Endothelial cell of umbilical vein (primary cell): ENCODE measurements at regions of chr5 and their contacts with region 1.

Region 1: DNA sequence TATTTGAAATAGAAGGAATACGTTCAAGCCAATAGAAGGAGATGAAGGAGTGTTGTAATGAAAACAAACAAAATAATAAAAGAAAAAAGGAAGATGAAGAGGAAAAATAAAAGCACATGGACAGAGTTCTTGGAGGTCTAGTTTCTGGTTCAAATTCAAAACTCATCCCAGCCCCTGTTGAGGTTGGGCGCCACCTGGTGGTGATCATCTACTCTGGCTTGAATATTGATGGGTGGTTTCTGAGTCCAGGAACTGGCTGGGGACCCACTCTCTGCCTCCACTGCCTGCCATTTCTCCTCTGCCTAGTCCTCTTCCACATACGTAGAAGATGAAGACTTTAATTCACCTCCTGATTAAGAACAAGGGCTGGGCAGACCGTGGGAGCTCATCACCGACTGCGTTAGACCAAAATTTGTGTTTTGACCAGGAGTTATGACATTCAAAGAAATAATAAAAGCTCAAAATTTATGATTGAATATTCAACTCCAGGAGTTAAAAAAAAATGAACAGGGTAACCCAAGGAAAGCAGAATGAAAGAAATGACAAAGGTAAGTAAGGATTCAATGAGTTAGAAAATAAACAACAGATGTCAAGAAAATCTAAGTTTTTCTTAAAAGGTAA is 99.0 kb upstream of the SLC1A3 start:
- DNase-seq: peak; percentile 53
- H3K4me3 ChIP-seq: no peak overlapping the region
- H3K27ac ChIP-seq: no peak overlapping the region
- H3K4me1 ChIP-seq: no peaks in the 10 kb centered on the region
- H3K27me3 ChIP-seq: no peaks in the 10 kb centered on the region
- CTCF ChIP-seq: peak; percentile 78 to 84
- POLR2A ChIP-seq: no peak

Region 2: GRCh38 chr5:36214434-36214833 is 293.0 kb before region 1 on chr5:
- CTCF ChIA-PET with region 1: interaction called, 3 read pairs
- POLR2A ChIA-PET with region 1: no interaction called
- dilution Hi-C with region 1: no loop called
- intact Hi-C with region 1: loop called (anchors 1 kb)
- DNase-seq: no peak
- H3K4me3 ChIP-seq: no peak overlapping the region
- H3K27ac ChIP-seq: no peak overlapping the region
- H3K4me1 ChIP-seq: peaks cover 11% of the 10 kb centered on the region
- H3K27me3 ChIP-seq: no peaks in the 10 kb centered on the region
- CTCF ChIP-seq: no peak
- POLR2A ChIP-seq: no peak

Region 3: GRCh38 chr5:36414869-36415282 is 92.6 kb before region 1 on chr5:
- CTCF ChIA-PET with region 1: interaction called, 72 read pairs
- POLR2A ChIA-PET with region 1: no interaction called
- dilution Hi-C with region 1: no loop called
- intact Hi-C with region 1: loop called (anchors 1 kb)
- DNase-seq: peak; percentile 42
- H3K4me3 ChIP-seq: no peak overlapping the region
- H3K27ac ChIP-seq: no peak overlapping the region
- H3K4me1 ChIP-seq: no peaks in the 10 kb centered on the region
- H3K27me3 ChIP-seq: no peaks in the 10 kb centered on the region
- CTCF ChIP-seq: peak; percentile 9 to 21
- POLR2A ChIP-seq: no peak

Region 4: GRCh38 chr5:36530215-36530614 is 22.8 kb after region 1 on chr5:
- CTCF ChIA-PET with region 1: no interaction called
- POLR2A ChIA-PET with region 1: no interaction called
- dilution Hi-C with region 1: no loop called
- intact Hi-C with region 1: no loop called
- DNase-seq: no peak
- H3K4me3 ChIP-seq: no peak overlapping the region
- H3K27ac ChIP-seq: no peak overlapping the region
- H3K4me1 ChIP-seq: no peaks in the 10 kb centered on the region
- H3K27me3 ChIP-seq: peaks cover 0 to 1% of the 10 kb centered on the region in 2 experiments
- CTCF ChIP-seq: no peak
- POLR2A ChIP-seq: no peak

Region 5: DNA sequence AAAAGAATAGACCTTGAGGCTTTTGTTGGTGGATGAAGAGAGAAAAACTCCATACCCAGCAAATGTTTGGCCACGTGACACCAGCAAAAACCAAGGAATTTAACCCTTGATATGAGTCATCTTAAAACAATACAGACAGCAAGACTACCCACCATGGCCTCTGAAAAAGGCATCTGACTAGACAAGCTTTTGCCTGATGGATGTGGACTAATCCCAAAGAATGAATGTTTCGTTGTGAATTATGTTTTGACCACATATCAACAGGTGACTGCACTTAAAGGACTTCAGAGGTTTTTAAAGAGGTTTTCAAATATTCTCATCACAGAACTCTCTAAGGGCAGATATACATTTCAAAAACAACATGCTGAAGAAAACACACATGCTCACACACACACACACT is 66.0 kb after region 1 on chr5:
- CTCF ChIA-PET with region 1: interaction called, 5 read pairs
- POLR2A ChIA-PET with region 1: no interaction called
- dilution Hi-C with region 1: no loop called
- intact Hi-C with region 1: loop called (anchors 2 kb)
- DNase-seq: peak; percentile 51
- H3K4me3 ChIP-seq: no peak overlapping the region
- H3K27ac ChIP-seq: peak overlapping the region; percentile 24
- H3K4me1 ChIP-seq: peaks cover 29% of the 10 kb centered on the region
- H3K27me3 ChIP-seq: no peaks in the 10 kb centered on the region
- CTCF ChIP-seq: no peak
- POLR2A ChIP-seq: no peak

Region 6: GRCh38 chr5:36690041-36690961 is 182.9 kb after region 1 on chr5:
- CTCF ChIA-PET with region 1: interaction called, 9 read pairs
- POLR2A ChIA-PET with region 1: no interaction called
- dilution Hi-C with region 1: no loop called
- intact Hi-C with region 1: loop called (anchors 1 kb)
- DNase-seq: peak; percentile 48
- H3K4me3 ChIP-seq: peak overlapping the region; percentile 16 to 36 (median 28)
- H3K27ac ChIP-seq: no peak overlapping the region
- H3K4me1 ChIP-seq: no peaks in the 10 kb centered on the region
- H3K27me3 ChIP-seq: peaks cover 2 to 3% of the 10 kb centered on the region in 2 experiments
- CTCF ChIP-seq: peak; percentile 82 to 92
- POLR2A ChIP-seq: no peak